ENCODE measurements at regions of chr5 and their contacts with region 1.

Region 1: DNA sequence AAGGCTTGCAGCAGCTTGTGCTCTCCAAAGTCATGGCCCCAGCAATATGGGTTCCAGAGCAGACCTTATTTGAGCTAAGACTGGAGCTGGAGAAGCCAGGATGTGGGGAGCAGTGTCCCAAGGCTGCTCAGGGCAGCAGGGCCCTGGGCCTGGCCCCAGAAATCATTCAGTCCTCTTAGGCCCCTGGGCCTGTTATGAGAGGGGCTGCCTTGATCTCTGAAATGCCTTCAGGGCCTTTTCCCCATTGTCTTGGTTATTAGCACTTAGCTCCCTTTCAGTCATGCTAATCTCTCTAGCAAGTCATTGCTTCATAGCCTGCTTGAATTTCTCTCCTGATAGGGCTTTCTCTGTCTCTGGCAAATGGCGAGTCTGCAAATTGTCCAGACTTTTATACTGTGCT is 9.1 kb downstream of the CATSPER3 start:
- DNase-seq: no peak
- ATAC-seq: no peak
- H3K4me3 ChIP-seq: no peak overlapping the region
- H3K27ac ChIP-seq: no peak overlapping the region
- H3K4me1 ChIP-seq: no peaks in the 10 kb centered on the region
- H3K27me3 ChIP-seq: no peaks in the 10 kb centered on the region
- CTCF ChIP-seq: no peak

Region 2: DNA sequence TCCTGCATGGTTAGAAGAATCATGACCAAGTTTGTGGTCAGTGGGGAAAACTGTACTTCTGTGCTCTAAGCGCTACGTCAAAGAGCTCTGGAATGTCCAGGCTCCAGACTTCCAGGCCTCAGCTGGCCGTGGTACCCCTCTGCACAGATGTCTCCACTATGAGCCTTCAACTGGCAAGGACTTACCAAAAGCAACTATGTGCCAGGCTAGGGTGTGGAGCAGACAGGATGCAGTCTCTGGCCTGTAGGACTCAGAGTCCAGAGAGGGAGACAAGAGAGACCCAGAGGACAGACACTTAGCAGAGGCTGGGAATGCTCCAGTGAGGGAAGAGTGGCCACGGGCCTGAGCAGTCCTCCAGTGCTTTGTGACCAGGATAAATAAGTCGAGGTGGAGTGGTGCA is 893.3 kb before region 1 on chr5:
- CTCF ChIA-PET with region 1: no interaction called
- POLR2A ChIA-PET with region 1: no interaction called
- in situ Hi-C with region 1: no loop called
- intact Hi-C with region 1: no loop called
- DNase-seq: no peak
- ATAC-seq: peak; percentile 67
- H3K4me3 ChIP-seq: no peak overlapping the region
- H3K27ac ChIP-seq: no peak overlapping the region
- H3K4me1 ChIP-seq: no peaks in the 10 kb centered on the region
- H3K27me3 ChIP-seq: no peaks in the 10 kb centered on the region
- CTCF ChIP-seq: no peak

Region 3: DNA sequence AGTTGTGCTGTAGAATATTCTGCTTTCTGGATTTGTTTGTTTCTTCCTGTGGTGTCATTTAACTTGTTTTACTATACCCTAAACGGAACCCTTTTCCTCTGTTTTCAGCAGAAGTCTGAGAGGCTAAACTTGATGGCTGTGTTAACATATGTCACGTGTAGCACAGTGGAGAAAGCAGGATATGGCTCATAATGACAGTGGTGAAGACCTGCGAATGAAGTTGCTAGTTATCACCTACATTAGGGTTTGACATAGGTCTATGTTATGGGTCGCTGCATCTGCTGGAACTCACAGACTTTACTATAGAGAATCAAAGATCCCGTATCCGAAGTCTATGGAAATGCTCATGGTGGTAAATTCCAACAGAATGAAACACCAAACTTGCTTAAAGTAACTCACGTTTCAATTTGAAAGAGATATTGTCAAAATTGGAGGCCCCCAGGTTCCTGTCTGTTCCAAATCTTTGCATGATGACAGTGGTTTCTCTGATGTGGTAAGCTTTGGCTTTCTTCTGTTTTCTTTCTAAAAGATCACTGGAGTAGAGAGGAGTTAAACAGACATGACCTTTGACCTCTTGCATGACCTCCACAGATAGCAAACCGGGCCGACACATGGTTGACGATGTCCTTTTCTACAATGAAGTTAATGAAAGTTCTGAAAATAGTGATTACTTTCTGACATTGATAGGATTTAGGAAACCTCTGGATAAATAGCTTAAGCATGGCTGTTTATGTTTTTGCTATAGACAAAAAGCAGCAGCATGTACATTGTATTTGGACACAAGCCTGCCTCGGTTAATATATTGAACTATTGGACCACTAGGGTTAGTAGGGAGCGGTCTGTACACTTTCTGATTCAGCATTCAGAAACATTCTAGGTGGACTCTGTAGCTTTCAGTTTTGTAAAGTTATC is 12.2 kb before region 1 on chr5:
- CTCF ChIA-PET with region 1: no interaction called
- POLR2A ChIA-PET with region 1: interaction called, 14 read pairs
- in situ Hi-C with region 1: no loop called
- intact Hi-C with region 1: no loop called
- DNase-seq: no peak
- ATAC-seq: no peak
- H3K4me3 ChIP-seq: no peak overlapping the region
- H3K27ac ChIP-seq: no peak overlapping the region
- H3K4me1 ChIP-seq: no peaks in the 10 kb centered on the region
- H3K27me3 ChIP-seq: no peaks in the 10 kb centered on the region
- CTCF ChIP-seq: no peak

Measured in Panc1 (cell line).